ENCODE measurements at regions of chr3 and their contacts with region 1.

Region 1: GRCh38 chr3:170107941-170108340 is 70.1 kb downstream of the GPR160 start:
- DNase-seq: no peak
- ATAC-seq: no peak
- H3K4me3 ChIP-seq: no peak overlapping the region
- H3K27ac ChIP-seq: no peak overlapping the region
- H3K4me1 ChIP-seq: peaks cover 0 to 13% (median 5%) of the 10 kb centered on the region in 9 donors
- H3K27me3 ChIP-seq: no peaks in the 10 kb centered on the region
- CTCF ChIP-seq: no peak

Region 2: GRCh38 chr3:169980055-169980454 is 127.9 kb before region 1 on chr3:
- intact Hi-C with region 1: loop called in 2 of 10 experiments (anchors 10 kb)
- DNase-seq: no peak
- ATAC-seq: no peak
- H3K4me3 ChIP-seq: no peak overlapping the region
- H3K27ac ChIP-seq: peak overlapping the region in 1 of 10 donors; percentile 52
- H3K4me1 ChIP-seq: peaks cover 0 to 9% (median 0%) of the 10 kb centered on the region in 9 donors
- H3K27me3 ChIP-seq: no peaks in the 10 kb centered on the region
- CTCF ChIP-seq: no peak

Region 3: DNA sequence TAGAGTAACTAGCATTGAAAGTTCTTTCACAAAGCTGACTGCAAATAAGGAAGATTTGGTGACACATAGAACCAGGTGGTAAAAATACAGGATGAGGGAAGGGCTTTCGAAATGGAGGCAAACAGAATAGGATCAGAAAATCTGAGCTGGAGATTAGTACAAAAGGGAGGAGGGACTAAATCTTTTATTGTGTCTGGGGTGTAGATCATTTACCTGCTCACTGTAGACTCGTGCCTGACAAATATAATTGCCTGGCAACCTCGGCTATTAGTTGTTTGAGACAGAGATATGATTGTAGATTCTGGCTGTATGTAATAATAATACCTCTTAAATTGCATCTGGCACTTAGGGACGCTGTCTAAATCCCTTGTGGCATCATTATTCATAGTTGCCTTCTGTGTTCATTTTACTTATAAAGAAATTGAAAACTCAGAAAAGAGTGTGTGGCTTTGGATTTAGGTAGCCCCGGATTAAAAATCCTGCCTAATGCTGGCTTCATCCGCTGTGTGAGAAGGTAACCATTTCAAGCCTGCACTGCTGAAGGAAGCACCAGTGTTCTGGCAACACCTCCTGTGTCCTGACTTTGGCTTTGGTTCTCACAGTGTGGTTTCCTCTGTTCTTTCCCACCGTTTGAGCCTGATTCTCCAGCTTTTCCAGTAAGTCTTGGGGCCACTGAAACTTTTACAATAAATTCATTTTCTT is 95.1 kb before region 1 on chr3:
- intact Hi-C with region 1: no loop called
- DNase-seq: no peak
- ATAC-seq: no peak
- H3K4me3 ChIP-seq: no peak overlapping the region
- H3K27ac ChIP-seq: no peak overlapping the region
- H3K4me1 ChIP-seq: no peaks in the 10 kb centered on the region
- H3K27me3 ChIP-seq: peaks cover 0 to 5% (median 0%) of the 10 kb centered on the region in 7 donors
- CTCF ChIP-seq: no peak

Region 4: GRCh38 chr3:170162630-170163029 is 54.7 kb after region 1 on chr3:
- intact Hi-C with region 1: no loop called
- DNase-seq: no peak
- ATAC-seq: no peak
- H3K4me3 ChIP-seq: no peak overlapping the region
- H3K27ac ChIP-seq: no peak overlapping the region
- H3K4me1 ChIP-seq: peaks cover 0 to 19% (median 11%) of the 10 kb centered on the region in 9 donors
- H3K27me3 ChIP-seq: no peaks in the 10 kb centered on the region
- CTCF ChIP-seq: no peak

Measured in heart right ventricle (tissue), 16 donors.